ENCODE measurements at regions of chr5 and their contacts with region 1.

Region 1: GRCh38 chr5:135398853-135399523 is at the start of gene MACROH2A1:
- DNase-seq: peak; percentile 88
- H3K4me3 Mint-ChIP-seq: peak within 1 kb of the TSS; percentile 83
- H3K27ac Mint-ChIP-seq: peak within 1 kb of the TSS; percentile 84
- H3K4me1 Mint-ChIP-seq: peaks cover 56% of the 10 kb centered on the region
- H3K27me3 Mint-ChIP-seq: peaks cover 5% of the 10 kb centered on the region
- total RNA-seq, gene MACROH2A1: 248 to 263 TPM

Region 2: DNA sequence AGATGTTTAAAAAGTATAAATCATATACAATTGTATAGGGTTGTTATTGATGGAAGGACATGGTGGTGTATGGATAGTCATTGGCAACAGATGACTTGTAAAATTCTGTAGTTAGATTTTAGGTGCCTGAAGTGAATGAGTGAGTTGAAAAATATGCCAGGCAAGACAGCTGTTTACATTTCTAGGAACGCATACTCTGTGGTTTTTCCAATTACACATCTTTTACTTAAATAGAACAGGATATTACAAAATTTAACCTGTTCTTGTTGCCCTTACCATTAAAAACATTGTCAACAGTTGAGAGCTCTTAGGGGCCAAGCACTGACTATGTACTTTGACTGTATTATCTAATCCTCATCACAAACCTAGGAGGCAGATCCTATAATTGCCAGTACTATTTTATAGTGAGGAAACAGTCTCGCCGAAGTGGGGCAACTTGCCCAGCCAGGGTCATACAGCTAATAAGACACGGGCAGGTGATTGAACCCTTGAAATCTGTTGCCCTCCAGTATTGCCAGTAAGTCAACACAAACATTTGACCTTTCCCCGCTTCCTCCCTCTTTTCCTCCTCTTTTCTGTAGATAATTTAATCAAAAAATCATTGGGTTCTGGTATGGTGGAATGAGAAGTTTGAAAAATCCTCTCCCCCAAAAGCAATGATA is 88.5 kb before region 1 on chr5:
- CTCF ChIA-PET with region 1: no interaction called
- POLR2A ChIA-PET with region 1: interaction called, 10 read pairs
- DNase-seq: no peak
- H3K4me3 Mint-ChIP-seq: no peak overlapping the region
- H3K27ac Mint-ChIP-seq: peak overlapping the region; percentile 83
- H3K4me1 Mint-ChIP-seq: peaks cover 70% of the 10 kb centered on the region
- H3K27me3 Mint-ChIP-seq: no peaks in the 10 kb centered on the region

Region 3: GRCh38 chr5:135426102-135427082 is 27.4 kb after region 1 on chr5:
- CTCF ChIA-PET with region 1: interaction called, 6 read pairs
- POLR2A ChIA-PET with region 1: interaction called, 15 read pairs
- DNase-seq: peak; percentile 34
- H3K4me3 Mint-ChIP-seq: no peak overlapping the region
- H3K27ac Mint-ChIP-seq: no peak overlapping the region
- H3K4me1 Mint-ChIP-seq: peaks cover 10% of the 10 kb centered on the region
- H3K27me3 Mint-ChIP-seq: peaks cover 21% of the 10 kb centered on the region

Measured in activated CD4-positive, alpha-beta memory T cell treated with anti-CD3 and anti-CD28 coated beads, Interleukin-2, amount 10 ng/mL, durations not matched to agents 7 days and 5 days (primary cell).